Mucosa of descending colon (tissue), 3 donors: ENCODE measurements at regions of chrX and their contacts with region 1.

Region 1: GRCh38 chrX:49291615-49292337 is 11.7 kb upstream of the GAGE10 start:
- DNase-seq: peak in 2 of 3 donors; percentile 67 to 77
- ATAC-seq: peak; percentile 88
- H3K4me3 ChIP-seq: no peak overlapping the region
- H3K4me1 ChIP-seq: no peaks in the 10 kb centered on the region
- CTCF ChIP-seq: peak; percentile 32

Region 2: GRCh38 chrX:49129427-49129826 is 162.3 kb before region 1 on chrX:
- intact Hi-C with region 1: no loop called
- DNase-seq: no peak
- ATAC-seq: no peak
- H3K4me3 ChIP-seq: no peak overlapping the region
- H3K4me1 ChIP-seq: no peaks in the 10 kb centered on the region
- CTCF ChIP-seq: no peak

Region 3: DNA sequence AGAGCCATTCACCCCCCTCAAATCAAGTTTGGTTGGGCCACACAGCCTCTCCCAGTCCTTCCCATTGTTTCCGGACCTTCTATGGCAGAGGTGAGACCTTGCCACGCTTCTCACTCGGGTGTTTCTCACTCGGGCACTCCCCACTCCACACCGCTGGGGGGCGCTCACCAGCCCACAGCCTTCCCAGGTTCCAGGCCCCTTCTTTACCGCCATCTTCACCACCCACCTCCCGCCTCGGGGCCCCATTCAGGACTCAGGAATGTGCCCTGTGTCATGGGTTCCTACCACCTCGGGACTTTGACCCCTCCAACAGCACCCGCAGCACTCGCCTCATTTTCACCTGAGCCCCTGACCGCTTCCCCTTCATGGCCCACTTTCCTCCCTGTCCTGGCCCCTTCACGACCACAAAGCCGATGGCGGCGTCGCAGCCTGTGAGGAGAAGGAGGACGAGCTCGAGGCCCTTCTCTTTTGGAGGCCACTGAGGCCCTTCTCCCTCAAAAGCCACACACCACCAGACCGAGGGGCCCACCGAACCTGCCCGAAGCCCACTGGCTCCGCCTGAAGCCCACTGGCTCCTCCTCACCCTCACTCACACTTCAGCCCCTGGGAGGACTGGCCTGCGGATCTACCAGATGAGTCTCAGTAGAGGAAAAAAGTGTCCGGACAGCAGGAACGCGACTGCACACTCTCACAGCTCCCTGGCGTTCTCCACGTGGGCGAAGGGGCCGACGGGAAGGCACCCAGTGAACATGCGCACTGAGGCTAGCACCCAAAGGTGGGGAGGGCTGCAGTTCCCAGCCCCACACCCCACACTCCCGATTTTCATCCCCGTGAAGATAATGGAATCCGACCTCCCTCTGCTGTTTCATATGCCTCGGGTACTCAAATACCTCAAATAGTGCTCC is 403.8 kb after region 1 on chrX and contains the start of gene PAGE1:
- intact Hi-C with region 1: no loop called
- DNase-seq: peak in 1 of 3 donors; percentile 40
- ATAC-seq: no peak
- H3K4me3 ChIP-seq: no peak within 1 kb of the TSS
- H3K4me1 ChIP-seq: no peaks in the 10 kb centered on the region
- CTCF ChIP-seq: no peak
- total RNA-seq, gene PAGE1: not detected

Region 4: DNA sequence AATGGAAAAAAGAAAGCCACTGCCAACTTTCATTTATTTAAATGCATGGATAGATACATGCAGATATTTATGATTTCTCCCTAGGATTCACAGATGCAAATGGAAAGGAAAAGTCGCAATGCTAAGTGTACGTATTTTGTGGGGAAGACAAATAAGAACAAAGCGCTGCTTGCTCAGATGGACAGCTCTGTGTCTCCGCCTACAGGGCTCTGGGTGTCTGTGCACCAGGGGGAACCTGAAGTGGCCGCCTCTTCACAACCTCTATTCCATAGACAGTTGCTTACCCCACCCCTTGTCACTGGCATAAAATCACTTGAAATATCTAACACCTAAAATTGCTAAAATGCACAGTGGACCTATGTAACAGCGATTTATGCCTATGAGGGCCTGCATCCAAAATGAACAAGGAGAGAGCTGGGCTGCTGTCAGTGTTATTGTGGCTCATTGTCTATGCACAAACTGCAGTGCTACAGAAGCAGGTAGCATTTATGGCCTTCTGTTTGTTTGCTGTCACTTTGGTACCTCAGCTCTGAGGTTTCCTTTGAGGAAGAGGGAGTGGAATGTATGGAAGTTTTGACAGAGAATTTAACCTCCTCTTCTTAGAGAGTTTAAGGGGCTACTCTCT is 462.6 kb after region 1 on chrX:
- intact Hi-C with region 1: loop called in 1 of 2 experiments (anchors 5 kb)
- DNase-seq: peak in 2 of 3 donors; percentile 35 to 36
- ATAC-seq: peak; percentile 59
- H3K4me3 ChIP-seq: no peak overlapping the region
- H3K4me1 ChIP-seq: no peaks in the 10 kb centered on the region
- CTCF ChIP-seq: peak; percentile 49